Activated naive CD4-positive, alpha-beta T cell treated with anti-CD3 and anti-CD28 coated beads, Interleukin-2, amount 10 ng/mL, durations not matched to agents 7 days and 5 days (primary cell): ENCODE measurements at regions of chr7 and their contacts with region 1.

Region 1: DNA sequence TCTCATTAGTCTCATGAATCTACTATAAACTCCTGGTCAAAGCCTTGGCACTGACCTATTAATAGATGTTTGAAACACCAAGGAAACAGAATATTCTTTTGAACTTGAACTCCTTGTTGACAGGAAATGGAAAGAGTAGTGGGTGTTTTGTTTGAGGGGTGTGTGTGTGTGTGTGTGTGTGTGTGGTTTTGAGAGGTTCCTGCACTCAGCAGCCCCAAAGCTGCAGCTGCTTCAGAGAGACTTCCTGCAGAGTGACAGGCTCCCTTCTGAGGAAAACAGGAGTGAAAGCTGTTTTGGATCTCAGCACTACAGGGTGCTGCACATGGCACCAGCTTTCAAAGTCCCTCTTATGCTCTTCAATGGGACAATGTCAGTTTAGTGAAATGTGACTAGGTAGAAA is 546.5 kb upstream of the STEAP1 start:
- DNase-seq: peak; percentile 78
- H3K4me3 Mint-ChIP-seq: peak overlapping the region; percentile 25
- H3K27ac Mint-ChIP-seq: peak overlapping the region; percentile 89
- H3K4me1 Mint-ChIP-seq: peaks cover 72% of the 10 kb centered on the region
- H3K27me3 Mint-ChIP-seq: no peaks in the 10 kb centered on the region

Region 2: DNA sequence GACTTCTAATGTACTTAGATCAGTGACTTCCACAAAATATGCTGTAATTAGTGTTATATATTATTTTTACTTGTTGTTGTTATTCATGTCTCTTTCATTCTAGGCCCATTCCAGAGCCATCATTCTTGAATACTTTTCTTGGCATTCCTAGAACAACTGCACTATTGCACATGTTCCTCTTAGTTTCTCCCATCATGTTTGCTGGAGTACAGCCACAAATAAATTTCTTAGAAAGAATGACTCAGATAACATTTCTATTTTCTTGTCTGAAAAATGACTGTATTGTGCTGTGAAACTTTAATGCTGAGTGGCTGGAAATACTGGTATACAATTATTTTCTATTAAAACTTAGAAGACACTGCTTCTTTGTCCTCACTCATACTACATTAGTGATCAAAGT is 104.5 kb before region 1 on chr7:
- CTCF ChIA-PET with region 1: no interaction called
- DNase-seq: no peak
- H3K4me3 Mint-ChIP-seq: no peak overlapping the region
- H3K27ac Mint-ChIP-seq: no peak overlapping the region
- H3K4me1 Mint-ChIP-seq: no peaks in the 10 kb centered on the region
- H3K27me3 Mint-ChIP-seq: no peaks in the 10 kb centered on the region

Region 3: GRCh38 chr7:89622838-89623672 is 15.3 kb after region 1 on chr7:
- CTCF ChIA-PET with region 1: interaction called, 11 read pairs
- DNase-seq: peak; percentile 54
- H3K4me3 Mint-ChIP-seq: no peak overlapping the region
- H3K27ac Mint-ChIP-seq: peak overlapping the region; percentile 50
- H3K4me1 Mint-ChIP-seq: peaks cover 39% of the 10 kb centered on the region
- H3K27me3 Mint-ChIP-seq: peaks cover 14% of the 10 kb centered on the region

Region 4: GRCh38 chr7:89642173-89642572 is 34.4 kb after region 1 on chr7:
- CTCF ChIA-PET with region 1: no interaction called
- DNase-seq: no peak
- H3K4me3 Mint-ChIP-seq: no peak overlapping the region
- H3K27ac Mint-ChIP-seq: no peak overlapping the region
- H3K4me1 Mint-ChIP-seq: no peaks in the 10 kb centered on the region
- H3K27me3 Mint-ChIP-seq: no peaks in the 10 kb centered on the region

Region 5: DNA sequence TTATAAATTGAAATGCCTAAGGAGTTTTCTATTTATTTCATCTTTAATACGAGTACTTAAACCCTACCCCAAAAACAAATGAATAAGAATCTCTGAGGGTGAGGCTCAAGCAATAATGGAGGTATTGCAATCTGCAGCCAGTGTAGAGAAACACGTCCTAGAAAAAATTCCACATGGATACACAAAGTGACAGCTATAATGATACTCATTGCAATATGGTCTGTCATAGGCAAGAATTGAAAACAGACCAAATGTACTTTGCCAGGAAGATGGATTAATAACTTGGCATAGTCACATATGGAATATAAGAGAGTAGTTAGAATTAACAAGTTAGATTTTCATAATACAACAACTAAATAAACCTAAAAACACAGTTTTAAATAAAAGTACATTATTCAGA is 106.3 kb after region 1 on chr7:
- CTCF ChIA-PET with region 1: no interaction called
- DNase-seq: no peak
- H3K4me3 Mint-ChIP-seq: no peak overlapping the region
- H3K27ac Mint-ChIP-seq: no peak overlapping the region
- H3K4me1 Mint-ChIP-seq: no peaks in the 10 kb centered on the region
- H3K27me3 Mint-ChIP-seq: no peaks in the 10 kb centered on the region